ENCODE measurements at regions of chr1 and their contacts with region 1.

Region 1: GRCh38 chr1:150979092-150980056 is 2.7 kb upstream of the ANXA9 start:
- DNase-seq: peak; percentile 92 to 94
- H3K4me3 ChIP-seq: peak overlapping the region; percentile 9 to 26
- H3K27ac ChIP-seq: peak overlapping the region; percentile 98
- H3K4me1 ChIP-seq: peaks cover 0 to 56% (median 40%) of the 10 kb centered on the region in 4 donors
- H3K27me3 ChIP-seq: no peaks in the 10 kb centered on the region
- CTCF ChIP-seq: peak; percentile 99

Region 2: GRCh38 chr1:150561974-150562445 is 417.4 kb before region 1 on chr1:
- intact Hi-C with region 1: loop called (anchors 10 kb)
- DNase-seq: peak; percentile 93 to 97
- H3K4me3 ChIP-seq: peak overlapping the region; percentile 51 to 53
- H3K27ac ChIP-seq: peak overlapping the region; percentile 99
- H3K4me1 ChIP-seq: peaks cover 12 to 89% (median 82%) of the 10 kb centered on the region in 4 donors
- H3K27me3 ChIP-seq: no peaks in the 10 kb centered on the region
- CTCF ChIP-seq: no peak

Region 3: DNA sequence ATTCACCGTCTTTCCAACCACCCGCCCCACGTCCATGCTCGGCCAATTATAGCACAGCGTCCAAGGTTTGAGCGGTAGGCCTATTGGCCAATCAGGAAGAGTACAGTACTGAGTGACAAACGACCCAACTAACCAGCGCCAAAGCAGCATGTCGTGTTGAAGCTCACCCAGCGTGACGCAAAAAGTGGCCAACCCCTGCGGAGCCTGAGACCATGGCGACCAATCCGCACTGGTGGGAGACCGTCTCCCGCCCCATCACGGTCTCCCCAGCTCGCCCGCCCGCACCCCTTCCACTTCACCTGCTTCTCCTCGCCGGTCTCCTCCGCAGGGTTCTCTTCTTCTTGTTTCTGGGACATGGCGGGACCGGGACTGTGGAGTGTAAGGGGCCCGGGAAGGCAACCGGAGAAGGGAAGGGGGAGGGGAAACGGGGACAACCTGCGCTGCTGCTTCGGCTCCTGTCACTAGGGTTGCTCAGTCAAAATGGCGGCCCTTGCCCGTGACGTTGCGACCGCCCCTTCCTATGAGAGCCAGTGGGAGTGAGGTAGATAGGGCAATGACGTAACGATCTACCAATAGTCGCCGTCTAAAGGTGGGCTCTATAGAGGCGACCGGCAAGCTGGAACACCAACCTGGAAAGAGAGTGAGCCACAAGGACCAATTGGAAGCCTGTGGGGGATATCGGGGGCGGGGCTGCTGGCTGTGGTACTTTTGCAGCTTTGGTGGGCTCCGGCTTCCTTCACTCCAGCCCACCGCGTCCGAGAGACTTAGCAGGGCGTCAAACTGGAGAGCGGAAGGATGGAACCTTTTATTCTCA is 350.1 kb before region 1 on chr1 and contains the start of gene ENSA:
- intact Hi-C with region 1: loop called (anchors 10 kb)
- DNase-seq: peak; percentile 99
- H3K4me3 ChIP-seq: peak within 1 kb of the TSS; percentile 62 to 68
- H3K27ac ChIP-seq: peak within 1 kb of the TSS; percentile 85 to 94
- H3K4me1 ChIP-seq: peaks cover 4 to 23% (median 13%) of the 10 kb centered on the region in 4 donors
- H3K27me3 ChIP-seq: no peaks in the 10 kb centered on the region
- CTCF ChIP-seq: peak in 1 of 2 experiments; percentile 17

Region 4: GRCh38 chr1:150875207-150876118 is 103.9 kb before region 1 on chr1:
- intact Hi-C with region 1: loop called (anchors 2 kb)
- DNase-seq: peak in 1 of 2 donors; percentile 28
- H3K4me3 ChIP-seq: peak overlapping the region; percentile 80 to 95
- H3K27ac ChIP-seq: peak overlapping the region; percentile 97 to 99
- H3K4me1 ChIP-seq: peaks cover 0 to 27% (median 11%) of the 10 kb centered on the region in 4 donors
- H3K27me3 ChIP-seq: no peaks in the 10 kb centered on the region
- CTCF ChIP-seq: no peak

Region 5: GRCh38 chr1:150925816-150926741 is 53.3 kb before region 1 on chr1 and contains the start of gene SETDB1:
- intact Hi-C with region 1: loop called (anchors 5 kb)
- DNase-seq: peak; percentile 95 to 97
- H3K4me3 ChIP-seq: peak within 1 kb of the TSS; percentile 79 to 81
- H3K27ac ChIP-seq: peak within 1 kb of the TSS; percentile 80 to 81
- H3K4me1 ChIP-seq: peaks cover 0 to 20% (median 9%) of the 10 kb centered on the region in 4 donors
- H3K27me3 ChIP-seq: no peaks in the 10 kb centered on the region
- CTCF ChIP-seq: no peak

Measured in tibial artery (tissue), 4 donors.